ENCODE measurements at regions of chr14 and their contacts with region 1.

Region 1: GRCh38 chr14:68979021-68979782 is at the start of gene ACTN1:
- DNase-seq: peak; percentile 94 to 96 (median 95)
- ATAC-seq: peak; percentile 86 to 91 (median 89)
- H3K4me3 ChIP-seq: peak within 1 kb of the TSS; percentile 72 to 100 (median 92)
- H3K27ac ChIP-seq: peak within 1 kb of the TSS; percentile 85 to 100 (median 96)
- H3K4me1 ChIP-seq: peaks cover 15 to 45% (median 36%) of the 10 kb centered on the region in 12 donors
- H3K27me3 ChIP-seq: no peaks in the 10 kb centered on the region
- CTCF ChIP-seq: no peak
- POLR2A ChIP-seq: peak in 1 of 2 donors; percentile 92
- total RNA-seq, gene ACTN1: 63.6 to 252 (median 110) TPM

Region 2: DNA sequence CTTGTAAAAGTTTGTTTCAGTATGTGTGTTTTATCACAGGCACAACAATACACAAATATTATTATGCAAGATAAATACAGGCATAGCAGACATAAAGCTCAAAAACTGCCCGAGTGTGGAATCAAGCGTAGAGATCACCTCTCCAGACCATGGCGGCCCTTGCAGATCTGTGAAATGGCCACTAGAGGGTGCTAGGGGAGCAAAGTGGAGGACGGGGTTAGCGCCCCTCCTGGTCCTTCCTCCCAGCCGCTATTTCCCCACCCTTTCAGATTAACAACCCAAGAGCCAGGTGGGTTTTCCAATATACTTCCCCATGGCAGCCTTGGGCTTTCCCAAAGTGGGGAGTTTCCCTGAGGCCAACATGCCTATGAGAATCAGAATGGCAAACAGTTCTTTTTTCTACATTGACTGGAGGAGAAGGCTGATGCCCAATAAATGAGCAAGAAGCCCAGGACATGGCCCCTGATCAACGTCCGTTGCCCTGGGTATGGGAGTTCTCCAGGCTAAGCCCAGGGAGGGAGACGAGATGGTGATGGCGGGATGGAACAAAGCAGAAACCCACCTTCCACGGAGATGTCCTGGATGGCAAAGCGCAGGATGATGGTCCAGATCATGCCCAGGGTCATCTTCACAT is 67.5 kb before region 1 on chr14:
- intact Hi-C with region 1: loop called in 7 of 10 experiments (anchors 1 to 10 kb)
- DNase-seq: peak; percentile 66 to 79 (median 75)
- ATAC-seq: peak; percentile 80 to 90 (median 88)
- H3K4me3 ChIP-seq: no peak overlapping the region
- H3K27ac ChIP-seq: peak overlapping the region in 3 of 12 donors; percentile 1 to 98 (median 10)
- H3K4me1 ChIP-seq: peaks cover 0 to 29% (median 8%) of the 10 kb centered on the region in 12 donors
- H3K27me3 ChIP-seq: no peaks in the 10 kb centered on the region
- CTCF ChIP-seq: peak; percentile 97 to 99 (median 99)
- POLR2A ChIP-seq: no peak

Region 3: DNA sequence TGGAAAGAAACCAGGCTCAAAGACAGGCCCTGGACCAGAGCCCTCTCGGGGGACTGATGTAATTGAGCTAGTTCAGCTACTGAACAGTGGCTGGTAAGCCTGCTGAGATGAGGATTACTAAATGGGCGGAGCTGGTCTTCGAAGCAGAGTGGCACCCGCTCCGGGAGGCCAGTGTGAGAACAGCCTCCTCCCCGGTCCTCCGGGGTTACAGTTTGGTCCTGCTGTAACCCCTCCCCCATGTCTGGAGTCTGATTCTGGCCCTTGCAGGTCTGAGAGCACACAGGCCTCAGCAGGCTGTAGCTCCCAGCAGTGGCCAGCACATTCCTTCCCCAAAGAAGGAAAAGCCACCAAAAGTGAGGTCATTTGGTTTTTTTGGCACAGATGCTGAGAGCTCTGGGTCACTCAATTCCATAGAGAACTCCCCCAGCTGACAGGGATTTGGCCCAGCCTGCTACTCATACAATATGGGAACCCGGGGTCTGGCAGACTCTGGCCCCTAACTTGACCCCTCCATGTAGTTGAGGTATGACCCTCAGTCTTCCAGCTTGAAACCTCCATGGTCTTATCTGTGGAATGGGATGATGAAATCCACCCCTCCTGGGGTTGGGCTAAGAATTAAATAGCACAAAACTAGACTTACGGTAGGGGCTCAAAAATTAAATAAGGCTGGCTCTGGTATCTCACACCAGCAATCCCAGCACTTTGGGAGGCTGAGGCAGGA is 39.1 kb before region 1 on chr14:
- intact Hi-C with region 1: loop called in 9 of 10 experiments (anchors 1 to 5 kb)
- DNase-seq: peak; percentile 82 to 93 (median 88)
- ATAC-seq: peak; percentile 70 to 80 (median 74)
- H3K4me3 ChIP-seq: peak overlapping the region in 1 of 12 donors; percentile 20
- H3K27ac ChIP-seq: peak overlapping the region; percentile 47 to 98 (median 85)
- H3K4me1 ChIP-seq: peaks cover 36 to 100% (median 98%) of the 10 kb centered on the region in 12 donors
- H3K27me3 ChIP-seq: no peaks in the 10 kb centered on the region
- CTCF ChIP-seq: peak in 1 of 12 donors; percentile 25
- POLR2A ChIP-seq: peak in 1 of 2 donors; percentile 24

Region 4: DNA sequence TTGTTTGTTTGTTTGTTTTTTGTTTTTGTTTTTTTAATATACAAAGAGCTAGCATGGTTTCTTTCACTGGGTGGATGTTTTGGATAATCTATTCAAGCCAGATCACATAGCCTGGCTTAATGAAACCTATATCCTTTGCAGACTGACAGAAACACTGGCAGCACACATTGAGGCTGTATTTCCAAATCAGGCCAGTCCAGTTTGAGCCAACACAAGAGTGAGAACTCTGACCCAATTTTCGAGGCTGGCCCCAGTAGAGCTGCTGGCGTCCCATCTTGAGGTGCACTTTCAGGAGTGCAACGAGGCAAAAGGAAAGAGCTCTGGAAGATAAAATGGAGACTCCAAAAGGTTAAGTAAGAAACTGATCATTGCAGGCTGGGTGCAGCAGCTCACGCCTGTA is 43.8 kb after region 1 on chr14:
- intact Hi-C with region 1: no loop called
- DNase-seq: no peak
- ATAC-seq: no peak
- H3K4me3 ChIP-seq: no peak overlapping the region
- H3K27ac ChIP-seq: no peak overlapping the region
- H3K4me1 ChIP-seq: no peaks in the 10 kb centered on the region
- H3K27me3 ChIP-seq: no peaks in the 10 kb centered on the region
- CTCF ChIP-seq: no peak
- POLR2A ChIP-seq: no peak

Region 5: DNA sequence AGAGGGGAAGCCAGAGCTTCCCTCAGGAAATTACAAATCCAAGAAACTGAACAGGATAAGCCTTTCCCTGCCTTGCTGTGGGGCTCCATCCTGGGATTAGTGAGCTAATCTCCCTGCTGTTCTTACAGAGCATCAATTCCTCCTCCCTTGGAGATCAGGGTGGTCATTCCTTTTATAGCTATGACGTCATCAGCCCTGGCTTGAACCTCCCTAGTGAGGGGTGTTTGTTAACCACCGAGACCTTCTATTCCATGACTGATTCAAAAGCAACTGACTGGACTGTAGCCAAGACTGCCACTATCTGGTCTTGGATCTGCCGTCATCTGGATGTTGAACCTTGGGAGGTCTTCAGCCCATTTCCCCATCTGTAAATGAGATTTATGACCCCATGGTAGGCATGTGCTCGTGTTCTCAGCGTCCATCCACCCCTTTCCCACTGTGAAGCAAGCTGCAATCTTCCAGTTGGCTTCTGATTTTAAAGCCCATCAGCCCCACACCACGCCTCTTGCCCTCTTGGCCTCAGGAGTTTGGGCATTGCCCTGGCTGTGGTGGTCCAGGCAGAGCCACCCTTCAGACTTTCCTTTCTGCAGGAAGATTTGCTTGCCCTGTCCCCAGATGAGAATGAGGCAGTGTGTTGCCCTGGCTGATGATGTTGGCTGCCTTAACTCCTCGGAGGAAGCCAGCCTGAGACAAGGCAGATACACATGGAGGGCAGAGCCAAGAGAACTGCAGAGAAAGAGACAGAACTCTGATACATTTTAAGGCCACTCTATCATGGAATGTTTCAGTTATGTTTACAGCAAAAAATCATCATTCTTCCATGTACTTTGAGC is 59.5 kb after region 1 on chr14:
- intact Hi-C with region 1: loop called in 2 of 10 experiments (anchors 10 kb)
- DNase-seq: no peak
- ATAC-seq: peak; percentile 8 to 76 (median 42)
- H3K4me3 ChIP-seq: no peak overlapping the region
- H3K27ac ChIP-seq: peak overlapping the region in 9 of 12 donors; percentile 4 to 64 (median 46)
- H3K4me1 ChIP-seq: peaks cover 0 to 61% (median 31%) of the 10 kb centered on the region in 12 donors
- H3K27me3 ChIP-seq: no peaks in the 10 kb centered on the region
- CTCF ChIP-seq: no peak
- POLR2A ChIP-seq: no peak

Region 6: DNA sequence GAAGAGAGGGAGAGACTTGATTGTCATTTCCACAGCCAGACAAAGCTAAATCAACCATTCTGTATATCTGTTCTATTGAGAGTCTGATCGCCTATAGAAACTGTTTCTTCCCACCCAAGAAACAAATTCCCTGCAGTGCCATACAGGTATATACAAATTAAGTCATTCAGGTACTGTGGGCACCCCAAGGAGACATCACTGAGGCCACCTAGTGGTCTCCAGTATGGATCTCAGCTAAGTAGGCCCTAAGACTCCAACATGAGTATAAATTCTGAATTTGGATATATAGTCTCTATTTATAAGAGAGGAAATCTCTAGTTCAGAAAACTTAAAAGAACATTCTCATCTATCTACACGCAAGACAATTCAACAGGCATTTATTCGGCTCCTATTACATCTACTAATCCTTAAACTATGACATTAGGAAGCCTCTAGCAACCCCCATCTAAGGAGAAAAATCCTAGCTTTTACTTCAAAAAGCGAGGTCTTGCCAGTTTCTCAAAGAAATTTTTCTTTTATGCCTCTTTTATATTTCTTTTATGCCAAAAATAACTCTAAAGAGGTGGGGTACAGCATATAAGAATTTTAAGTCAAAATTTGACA is 111.1 kb after region 1 on chr14:
- intact Hi-C with region 1: loop called in 1 of 10 experiments (anchors 10 kb)
- DNase-seq: peak in 1 of 5 donors; percentile 24
- ATAC-seq: peak in 3 of 4 donors; percentile 53 to 68 (median 58)
- H3K4me3 ChIP-seq: no peak overlapping the region
- H3K27ac ChIP-seq: peak overlapping the region in 1 of 12 donors; percentile 82
- H3K4me1 ChIP-seq: peaks cover 0 to 25% (median 10%) of the 10 kb centered on the region in 12 donors
- H3K27me3 ChIP-seq: no peaks in the 10 kb centered on the region
- CTCF ChIP-seq: peak; percentile 40 to 73 (median 58)
- POLR2A ChIP-seq: no peak